ENCODE measurements at regions of chr2 and their contacts with region 1.

Region 1: DNA sequence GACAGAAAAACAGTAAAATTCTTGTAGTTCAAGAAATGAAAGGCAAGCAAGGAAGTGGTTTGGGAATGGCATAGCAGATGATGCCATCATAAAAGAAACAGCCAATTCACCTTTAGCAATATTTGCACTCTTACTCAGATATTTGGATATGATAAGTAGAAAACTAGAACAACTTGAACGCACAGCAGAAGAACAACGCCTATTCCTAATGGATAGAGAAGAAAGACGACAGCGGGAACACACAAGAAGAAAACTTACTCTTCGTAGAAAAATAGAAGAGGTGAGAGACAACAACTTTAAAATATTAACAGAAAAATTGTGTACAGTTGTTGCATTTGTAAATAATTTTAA is 7.9 kb downstream of the FSIP2 start:
- DNase-seq: no peak
- H3K4me3 ChIP-seq: no peak overlapping the region
- H3K27ac ChIP-seq: no peak overlapping the region
- H3K4me1 ChIP-seq: no peaks in the 10 kb centered on the region
- H3K27me3 ChIP-seq: no peaks in the 10 kb centered on the region
- CTCF ChIP-seq: no peak

Region 2: GRCh38 chr2:185787227-185788145 is 41.0 kb after region 1 on chr2:
- CTCF ChIA-PET with region 1: no interaction called
- POLR2A ChIA-PET with region 1: no interaction called
- intact Hi-C with region 1: no loop called
- DNase-seq: peak; percentile 15
- H3K4me3 ChIP-seq: no peak overlapping the region
- H3K27ac ChIP-seq: no peak overlapping the region
- H3K4me1 ChIP-seq: no peaks in the 10 kb centered on the region
- H3K27me3 ChIP-seq: no peaks in the 10 kb centered on the region
- CTCF ChIP-seq: no peak

Region 3: GRCh38 chr2:186459009-186459408 is 712.5 kb after region 1 on chr2:
- CTCF ChIA-PET with region 1: no interaction called
- POLR2A ChIA-PET with region 1: no interaction called
- intact Hi-C with region 1: loop called (anchors 10 kb)
- DNase-seq: no peak
- H3K4me3 ChIP-seq: no peak overlapping the region
- H3K27ac ChIP-seq: no peak overlapping the region
- H3K4me1 ChIP-seq: no peaks in the 10 kb centered on the region
- H3K27me3 ChIP-seq: no peaks in the 10 kb centered on the region
- CTCF ChIP-seq: peak; percentile 28; the same call in 1 of the 2 replicates